ENCODE measurements at regions of chr17 and their contacts with region 1.

Region 1: DNA sequence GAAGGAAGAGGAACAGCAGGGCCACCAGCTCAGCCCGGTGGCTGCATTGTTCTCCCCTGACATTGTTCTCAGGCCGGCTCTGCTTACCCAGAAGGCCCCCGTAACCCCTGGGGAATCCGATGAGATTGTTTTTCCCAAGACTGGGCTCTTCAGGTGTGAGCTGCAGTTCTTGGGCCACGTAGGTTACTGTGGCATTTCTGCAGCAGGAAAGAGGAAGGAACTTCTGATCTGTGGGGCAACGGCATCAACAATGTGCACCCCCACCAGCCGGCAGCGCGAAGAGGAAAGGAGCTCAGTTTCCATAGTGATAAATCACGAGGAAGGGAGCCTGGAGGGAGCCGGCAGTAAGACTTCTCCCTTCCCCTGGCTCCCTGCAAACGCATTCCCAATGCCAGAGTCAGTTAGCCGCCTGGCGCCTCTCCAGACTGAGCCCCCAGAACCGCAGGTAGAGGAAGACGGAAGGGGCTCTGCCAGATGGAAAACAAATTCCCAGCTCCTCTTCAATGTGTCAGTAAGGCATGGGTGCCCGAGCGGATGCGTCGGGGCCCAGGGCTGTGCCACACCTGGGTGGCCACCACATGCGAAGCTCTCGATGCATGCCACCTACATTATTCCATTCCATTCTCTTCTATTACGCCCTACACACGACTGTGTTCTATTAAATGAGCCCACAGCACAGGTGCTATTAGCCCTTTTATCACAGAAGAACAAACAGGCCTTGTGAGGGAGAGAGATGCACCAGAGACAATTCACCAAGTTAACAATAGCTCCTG is 21.5 kb upstream of the PECAM1 start:
- DNase-seq: peak; percentile 99
- H3K4me3 ChIP-seq: no peak overlapping the region
- H3K27ac ChIP-seq: peak overlapping the region; percentile 86
- H3K4me1 ChIP-seq: peaks cover 45% of the 10 kb centered on the region
- H3K27me3 ChIP-seq: no peaks in the 10 kb centered on the region
- CTCF ChIP-seq: no peak
- POLR2A ChIP-seq: peak; percentile 52

Region 2: DNA sequence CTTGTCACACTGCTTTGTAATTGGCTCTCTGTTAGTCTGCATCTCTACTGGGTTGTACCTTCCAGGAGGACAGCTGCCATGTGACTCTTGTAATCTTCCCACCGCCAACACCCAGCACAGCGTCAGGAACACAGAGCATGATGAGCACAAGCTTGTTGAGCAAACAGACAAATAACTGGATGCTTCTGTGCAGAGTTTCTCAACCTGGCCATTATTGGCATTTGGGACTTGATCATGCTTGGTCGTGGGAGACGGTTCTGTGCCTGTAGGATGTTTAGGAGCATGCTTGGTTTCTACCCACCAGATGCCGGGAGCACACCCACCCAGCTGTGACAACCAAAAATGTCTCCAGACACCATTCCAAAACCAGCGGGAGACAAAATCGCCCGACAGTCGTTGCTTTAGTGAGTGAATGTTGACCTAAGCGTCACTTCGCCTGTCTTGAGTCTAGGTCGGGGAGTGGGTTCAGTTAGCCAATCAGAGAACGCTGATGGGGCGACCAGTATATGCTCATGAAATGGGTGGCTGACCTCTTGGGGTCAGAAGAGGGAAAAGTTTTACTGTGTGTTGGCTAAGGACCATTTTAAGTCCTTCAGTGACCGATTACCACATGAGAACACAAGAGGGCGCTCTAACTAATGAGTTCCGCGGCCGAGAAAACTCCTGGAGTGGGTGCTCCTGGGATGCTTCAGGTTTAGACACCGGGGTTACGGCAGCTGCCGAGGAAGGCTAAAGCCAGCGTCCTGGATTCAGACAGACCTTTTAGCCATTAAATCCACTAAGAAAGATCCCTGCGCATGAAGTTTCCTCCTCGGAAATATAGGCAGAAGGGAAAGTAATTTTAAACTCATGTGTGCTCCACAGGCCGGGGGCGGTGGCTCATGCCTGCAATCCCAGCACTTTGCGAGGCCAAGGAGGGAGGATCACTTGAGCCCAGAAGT is 91.3 kb before region 1 on chr17:
- CTCF ChIA-PET with region 1: interaction called, 70 read pairs
- POLR2A ChIA-PET with region 1: no interaction called
- dilution Hi-C with region 1: no loop called
- intact Hi-C with region 1: loop called (anchors 1 kb)
- DNase-seq: peak; percentile 85
- H3K4me3 ChIP-seq: no peak overlapping the region
- H3K27ac ChIP-seq: no peak overlapping the region
- H3K4me1 ChIP-seq: peaks cover 33% of the 10 kb centered on the region
- H3K27me3 ChIP-seq: no peaks in the 10 kb centered on the region
- CTCF ChIP-seq: peak; percentile 70 to 80
- POLR2A ChIP-seq: no peak

Region 3: DNA sequence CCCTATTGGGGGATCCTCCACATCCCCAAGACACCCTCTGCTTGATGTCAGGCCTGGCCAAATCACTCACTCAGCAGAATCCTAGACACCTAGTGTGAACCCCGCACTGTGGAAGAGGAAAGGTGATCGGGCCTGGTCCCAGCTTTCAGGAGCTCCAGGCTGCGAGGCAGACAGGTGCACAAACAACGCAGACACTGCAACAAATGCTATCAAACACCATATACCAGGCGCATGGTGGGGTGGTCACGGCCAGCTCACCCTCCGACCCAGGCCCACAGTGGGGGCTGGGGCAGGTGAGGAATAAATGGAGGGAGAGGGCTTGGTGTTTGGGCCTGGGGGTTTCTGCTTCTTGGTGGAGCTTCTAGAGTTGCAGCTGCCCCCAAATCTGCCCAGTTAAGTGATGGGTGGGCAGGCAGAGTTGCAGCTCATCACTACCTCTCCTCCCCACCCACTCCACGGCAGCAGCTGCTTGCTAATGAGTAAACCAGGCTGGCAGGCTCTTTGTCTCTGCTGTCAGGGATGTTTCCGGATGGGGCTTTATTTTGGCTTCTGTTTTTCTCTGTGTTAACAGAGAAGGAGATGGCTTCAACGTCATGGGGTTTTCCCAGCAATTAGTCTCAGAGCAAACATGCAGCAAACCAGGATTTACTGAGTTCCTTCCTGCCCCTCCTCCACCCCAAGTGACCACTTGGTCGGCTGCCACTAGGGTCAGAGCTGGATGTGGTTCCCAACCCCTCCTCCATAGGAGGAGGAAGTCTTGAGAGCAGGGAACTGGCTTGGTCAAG is 68.1 kb before region 1 on chr17:
- CTCF ChIA-PET with region 1: interaction called, 16 read pairs
- POLR2A ChIA-PET with region 1: no interaction called
- dilution Hi-C with region 1: no loop called
- intact Hi-C with region 1: loop called (anchors 1 kb)
- DNase-seq: peak; percentile 99
- H3K4me3 ChIP-seq: no peak overlapping the region
- H3K27ac ChIP-seq: peak overlapping the region; percentile 89
- H3K4me1 ChIP-seq: peaks cover 41% of the 10 kb centered on the region
- H3K27me3 ChIP-seq: no peaks in the 10 kb centered on the region
- CTCF ChIP-seq: no peak
- POLR2A ChIP-seq: peak; percentile 38

Region 4: GRCh38 chr17:64378890-64379354 is 33.3 kb before region 1 on chr17:
- CTCF ChIA-PET with region 1: interaction called, 60 read pairs
- POLR2A ChIA-PET with region 1: interaction called, 3 read pairs
- dilution Hi-C with region 1: no loop called
- intact Hi-C with region 1: loop called (anchors 1 kb)
- DNase-seq: peak; percentile 83
- H3K4me3 ChIP-seq: no peak overlapping the region
- H3K27ac ChIP-seq: peak overlapping the region; percentile 31
- H3K4me1 ChIP-seq: peaks cover 54% of the 10 kb centered on the region
- H3K27me3 ChIP-seq: no peaks in the 10 kb centered on the region
- CTCF ChIP-seq: no peak
- POLR2A ChIP-seq: peak; percentile 59

Region 5: DNA sequence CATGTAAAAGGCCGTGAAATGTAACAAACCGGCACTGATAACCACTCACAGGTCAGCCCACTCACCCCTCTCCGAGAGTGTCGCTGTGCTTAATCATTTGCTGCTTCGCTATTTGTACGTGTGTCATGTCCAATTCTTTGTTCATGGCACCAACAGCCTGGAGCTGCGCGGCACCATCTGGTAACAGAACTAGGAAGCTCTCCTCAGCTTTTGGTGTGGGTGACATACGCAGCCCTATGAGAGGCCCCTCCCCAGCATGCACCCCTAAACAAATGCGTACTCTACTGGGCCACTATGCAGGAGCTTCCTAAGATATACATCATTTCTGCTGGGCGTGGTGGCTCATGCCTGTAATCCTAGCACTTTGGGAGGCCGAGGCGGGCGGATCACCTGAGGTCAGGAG is 19.2 kb before region 1 on chr17:
- CTCF ChIA-PET with region 1: interaction called, 12 read pairs
- POLR2A ChIA-PET with region 1: interaction called, 17 read pairs
- dilution Hi-C with region 1: no loop called
- intact Hi-C with region 1: loop called (anchors 1 kb)
- DNase-seq: no peak
- H3K4me3 ChIP-seq: no peak overlapping the region
- H3K27ac ChIP-seq: no peak overlapping the region
- H3K4me1 ChIP-seq: peaks cover 16% of the 10 kb centered on the region
- H3K27me3 ChIP-seq: no peaks in the 10 kb centered on the region
- CTCF ChIP-seq: no peak
- POLR2A ChIP-seq: no peak

Region 6: GRCh38 chr17:64426568-64426967 is 14.4 kb after region 1 on chr17:
- CTCF ChIA-PET with region 1: no interaction called
- POLR2A ChIA-PET with region 1: no interaction called
- dilution Hi-C with region 1: no loop called
- intact Hi-C with region 1: no loop called
- DNase-seq: no peak
- H3K4me3 ChIP-seq: no peak overlapping the region
- H3K27ac ChIP-seq: no peak overlapping the region
- H3K4me1 ChIP-seq: no peaks in the 10 kb centered on the region
- H3K27me3 ChIP-seq: no peaks in the 10 kb centered on the region
- CTCF ChIP-seq: no peak
- POLR2A ChIP-seq: no peak

Region 7: GRCh38 chr17:64497565-64498035 is 85.4 kb after region 1 on chr17:
- CTCF ChIA-PET with region 1: no interaction called
- POLR2A ChIA-PET with region 1: no interaction called
- dilution Hi-C with region 1: no loop called
- intact Hi-C with region 1: no loop called
- DNase-seq: no peak
- H3K4me3 ChIP-seq: peak overlapping the region in 2 of 3 experiments; percentile 54 to 66
- H3K27ac ChIP-seq: peak overlapping the region; percentile 73
- H3K4me1 ChIP-seq: peaks cover 56% of the 10 kb centered on the region
- H3K27me3 ChIP-seq: no peaks in the 10 kb centered on the region
- CTCF ChIP-seq: no peak
- POLR2A ChIP-seq: no peak

Measured in endothelial cell of umbilical vein (primary cell).